GM23248 (cell line): ENCODE measurements at regions of chr6 and their contacts with region 1.

Region 1: GRCh38 chr6:20534295-20535262 is at the start of gene CDKAL1:
- DNase-seq: peak; percentile 93
- H3K4me3 ChIP-seq: peak within 1 kb of the TSS; percentile 95
- H3K27ac ChIP-seq: peak within 1 kb of the TSS; percentile 75
- H3K4me1 ChIP-seq: peaks cover 5% of the 10 kb centered on the region; the same call in 1 of the 2 replicates
- H3K27me3 ChIP-seq: no peaks in the 10 kb centered on the region
- total RNA-seq, gene CDKAL1: 10.8 and 14.8 TPM in 2 replicates

Region 2: GRCh38 chr6:20092071-20092566 is 442.5 kb before region 1 on chr6:
- in situ Hi-C with region 1: loop called (anchors 10 kb)
- DNase-seq: peak; percentile 52
- H3K4me3 ChIP-seq: no peak overlapping the region
- H3K27ac ChIP-seq: no peak overlapping the region
- H3K4me1 ChIP-seq: no peaks in the 10 kb centered on the region
- H3K27me3 ChIP-seq: no peaks in the 10 kb centered on the region

Region 3: DNA sequence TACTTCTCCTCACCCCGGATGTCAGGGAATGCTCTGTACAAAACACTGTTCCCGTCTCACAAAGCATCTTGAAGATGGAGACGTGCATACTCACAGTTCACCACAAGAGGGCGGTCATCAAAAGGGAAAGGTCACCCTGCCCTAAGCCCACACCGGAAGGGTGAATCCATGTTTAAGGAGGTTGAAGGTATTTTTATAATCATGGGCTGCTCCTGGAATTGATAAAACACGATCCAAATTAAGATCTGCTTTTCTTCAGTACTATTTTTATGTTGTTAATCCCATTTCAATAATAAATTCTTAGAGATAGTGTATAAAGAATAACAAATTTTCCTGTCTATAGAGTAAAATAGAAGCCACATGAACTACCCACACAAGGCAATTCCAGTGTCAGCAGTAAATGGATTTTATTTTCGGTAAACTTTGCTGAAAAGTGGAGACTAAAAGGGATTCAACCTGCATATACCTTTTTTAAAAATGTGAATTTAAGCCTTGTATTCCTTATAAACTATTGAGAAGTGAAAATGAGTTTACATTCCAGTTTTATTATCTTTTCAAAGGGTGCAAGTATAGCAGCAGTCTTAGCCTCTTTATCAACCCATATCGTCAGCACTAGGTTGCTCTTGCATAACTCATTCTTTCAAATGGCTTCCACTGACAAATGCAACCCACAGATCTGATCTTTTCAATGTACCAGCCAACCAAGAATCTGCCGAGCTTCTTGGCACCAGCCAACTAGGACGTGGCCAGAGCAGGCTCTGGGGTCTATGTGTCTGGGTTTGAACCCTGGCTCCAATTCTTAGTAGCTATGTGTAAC is 242.6 kb before region 1 on chr6:
- in situ Hi-C with region 1: loop called (anchors 5 kb)
- DNase-seq: peak; percentile 79
- H3K4me3 ChIP-seq: no peak overlapping the region
- H3K27ac ChIP-seq: no peak overlapping the region
- H3K4me1 ChIP-seq: no peaks in the 10 kb centered on the region
- H3K27me3 ChIP-seq: no peaks in the 10 kb centered on the region

Region 4: DNA sequence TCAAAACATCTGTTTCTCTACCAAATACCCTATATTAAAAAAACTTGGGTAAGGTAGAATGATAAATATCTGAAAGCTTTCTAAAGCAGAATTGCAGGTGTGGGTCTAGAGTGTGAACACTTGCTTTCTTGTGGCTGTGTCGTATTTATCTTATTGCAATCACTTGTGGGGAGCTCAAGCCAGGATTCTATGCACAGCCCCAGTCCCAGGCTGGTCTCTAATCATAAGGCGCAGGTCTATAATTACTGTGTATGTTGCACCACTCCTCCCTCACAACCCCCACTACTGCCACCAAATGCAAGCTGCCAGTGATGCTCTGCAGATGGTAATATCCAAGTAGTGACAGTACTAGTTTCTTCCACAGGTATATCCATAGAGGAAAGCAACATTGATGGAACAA is 135.1 kb before region 1 on chr6:
- in situ Hi-C with region 1: loop called (anchors 10 kb)
- DNase-seq: no peak
- H3K4me3 ChIP-seq: no peak overlapping the region
- H3K27ac ChIP-seq: no peak overlapping the region
- H3K4me1 ChIP-seq: no peaks in the 10 kb centered on the region; the same call in 1 of the 2 replicates
- H3K27me3 ChIP-seq: no peaks in the 10 kb centered on the region

Region 5: GRCh38 chr6:20770773-20771172 is 236.2 kb after region 1 on chr6:
- in situ Hi-C with region 1: no loop called
- DNase-seq: peak; percentile 20
- H3K4me3 ChIP-seq: no peak overlapping the region
- H3K27ac ChIP-seq: no peak overlapping the region
- H3K4me1 ChIP-seq: peaks cover 4% of the 10 kb centered on the region; the same call in 1 of the 2 replicates
- H3K27me3 ChIP-seq: no peaks in the 10 kb centered on the region

Region 6: GRCh38 chr6:20868397-20869096 is 334.0 kb after region 1 on chr6:
- in situ Hi-C with region 1: no loop called
- DNase-seq: no peak
- H3K4me3 ChIP-seq: no peak overlapping the region
- H3K27ac ChIP-seq: no peak overlapping the region
- H3K4me1 ChIP-seq: no peaks in the 10 kb centered on the region
- H3K27me3 ChIP-seq: no peaks in the 10 kb centered on the region